ENCODE measurements at regions of chr15 and their contacts with region 1.

Region 1: DNA sequence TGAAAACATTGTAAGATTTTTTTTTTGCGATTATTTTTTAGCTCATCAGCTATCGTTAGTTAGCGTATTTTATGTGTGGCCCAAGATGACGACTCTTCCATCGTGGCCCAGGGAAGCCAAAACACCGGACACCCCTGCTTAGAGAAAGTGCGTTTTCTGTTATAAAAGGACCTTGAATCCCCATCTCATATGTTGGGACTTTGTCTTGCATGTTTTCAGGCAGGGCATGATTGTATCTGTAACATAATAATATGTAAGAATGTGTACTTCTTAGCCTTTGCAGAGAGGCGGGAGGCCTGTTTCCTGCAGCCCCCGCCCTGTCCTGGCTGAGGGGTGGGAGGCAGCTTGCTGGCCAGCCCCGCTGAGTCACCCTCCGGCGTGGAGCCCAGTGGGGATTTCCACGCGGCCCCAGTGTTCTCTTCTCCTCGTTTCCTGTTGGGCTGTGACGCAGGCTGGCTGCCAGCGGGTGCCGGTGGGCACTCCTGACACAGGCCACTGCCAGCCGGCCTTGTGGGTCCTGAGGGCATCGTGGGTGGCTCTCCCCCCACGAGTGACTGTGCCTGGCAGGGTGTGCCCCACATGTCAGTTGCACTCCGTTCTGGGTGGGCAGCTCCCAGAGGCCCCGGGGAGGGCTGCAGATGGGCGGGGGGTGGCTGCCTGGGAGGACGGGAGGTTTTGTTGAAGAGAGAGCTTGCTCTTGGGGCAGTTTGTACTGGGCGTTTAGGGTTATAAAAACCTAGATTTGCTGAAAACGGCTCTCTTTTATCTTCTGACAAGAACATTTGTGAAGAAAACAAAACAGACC is 55.6 kb downstream of the SMAD3 start:
- DNase-seq: peak; percentile 96 to 99 (median 98)
- H3K4me3 ChIP-seq: no peak overlapping the region
- H3K4me3 Mint-ChIP-seq: peak overlapping the region; percentile 72 to 75
- H3K27ac ChIP-seq: peak overlapping the region; percentile 92 to 94
- H3K27ac Mint-ChIP-seq: peak overlapping the region; percentile 97 to 99 (median 98)
- H3K4me1 ChIP-seq: peaks cover 70 to 76% of the 10 kb centered on the region in 2 donors
- H3K4me1 Mint-ChIP-seq: peaks cover 87% of the 10 kb centered on the region
- H3K27me3 ChIP-seq: no peaks in the 10 kb centered on the region
- H3K27me3 Mint-ChIP-seq: peaks cover 0 to 3% (median 0%) of the 10 kb centered on the region in 3 donors
- CTCF ChIP-seq: no peak

Region 2: GRCh38 chr15:67080900-67081431 is 40.1 kb before region 1 on chr15:
- intact Hi-C with region 1: loop called in 1 of 2 experiments (anchors 5 kb)
- DNase-seq: peak; percentile 95 to 97 (median 96)
- H3K4me3 ChIP-seq: peak overlapping the region in 1 of 3 experiments; percentile 45
- H3K4me3 Mint-ChIP-seq: peak overlapping the region; percentile 56 to 58
- H3K27ac ChIP-seq: peak overlapping the region; percentile 75 to 83
- H3K27ac Mint-ChIP-seq: peak overlapping the region; percentile 88 to 96 (median 95)
- H3K4me1 ChIP-seq: peaks cover 91 to 98% of the 10 kb centered on the region in 2 donors
- H3K4me1 Mint-ChIP-seq: peaks cover 97% of the 10 kb centered on the region
- H3K27me3 ChIP-seq: no peaks in the 10 kb centered on the region
- H3K27me3 Mint-ChIP-seq: peaks cover 0 to under 1% (median 0%) of the 10 kb centered on the region in 3 donors
- CTCF ChIP-seq: peak; percentile 45

Region 3: DNA sequence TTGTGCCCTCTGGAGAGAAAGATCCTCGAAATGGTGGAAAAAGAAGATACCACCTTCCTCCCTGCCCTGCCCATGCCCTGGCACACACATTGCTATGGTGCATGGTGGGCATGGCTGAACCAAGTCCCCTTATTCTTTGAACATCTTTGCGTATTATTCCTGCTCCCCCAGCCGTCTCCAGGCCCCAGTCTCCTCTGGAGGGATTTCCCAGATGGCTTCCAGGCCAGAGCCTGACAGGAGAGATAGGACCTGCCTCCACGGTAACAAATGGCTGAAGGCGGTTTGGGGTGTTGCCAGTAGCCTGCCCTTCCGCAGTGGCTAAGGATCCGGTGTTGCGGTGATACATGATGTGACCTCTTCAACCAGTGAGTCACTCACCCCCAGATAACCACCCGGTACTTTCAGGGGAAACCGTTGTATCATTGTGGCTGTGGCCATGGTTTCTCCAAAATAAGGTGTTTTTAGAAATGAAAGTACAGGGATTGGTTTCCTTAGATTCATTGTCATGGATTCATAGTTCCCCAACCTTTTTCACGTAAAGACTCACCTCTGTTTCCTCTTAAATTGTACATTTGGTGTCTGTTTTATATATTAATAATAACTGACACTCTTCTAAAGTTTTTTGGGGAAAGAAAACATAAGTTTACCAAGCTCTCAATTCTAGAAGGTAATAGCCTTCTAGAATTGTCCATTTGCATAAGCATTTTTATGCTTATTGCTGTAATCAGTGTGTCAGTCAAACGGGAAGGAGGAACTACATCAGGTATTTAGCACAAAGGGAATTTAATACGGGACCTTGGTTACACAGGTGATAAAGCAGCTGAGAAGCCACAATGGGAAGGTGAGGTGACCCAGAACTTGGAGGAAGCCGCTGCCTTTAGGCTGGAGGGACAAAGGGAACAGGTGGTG is 29.7 kb before region 1 on chr15:
- intact Hi-C with region 1: loop called in 1 of 2 experiments (anchors 2 kb)
- DNase-seq: peak; percentile 96 to 98 (median 98)
- H3K4me3 ChIP-seq: peak overlapping the region in 1 of 3 experiments; percentile 46
- H3K4me3 Mint-ChIP-seq: peak overlapping the region; percentile 64 to 65
- H3K27ac ChIP-seq: peak overlapping the region; percentile 73 to 98
- H3K27ac Mint-ChIP-seq: peak overlapping the region; percentile 95 to 99 (median 98)
- H3K4me1 ChIP-seq: peaks cover 76 to 89% of the 10 kb centered on the region in 2 donors
- H3K4me1 Mint-ChIP-seq: peaks cover 97% of the 10 kb centered on the region
- H3K27me3 ChIP-seq: no peaks in the 10 kb centered on the region
- H3K27me3 Mint-ChIP-seq: peaks cover 0 to 4% (median 2%) of the 10 kb centered on the region in 3 donors
- CTCF ChIP-seq: no peak

Region 4: DNA sequence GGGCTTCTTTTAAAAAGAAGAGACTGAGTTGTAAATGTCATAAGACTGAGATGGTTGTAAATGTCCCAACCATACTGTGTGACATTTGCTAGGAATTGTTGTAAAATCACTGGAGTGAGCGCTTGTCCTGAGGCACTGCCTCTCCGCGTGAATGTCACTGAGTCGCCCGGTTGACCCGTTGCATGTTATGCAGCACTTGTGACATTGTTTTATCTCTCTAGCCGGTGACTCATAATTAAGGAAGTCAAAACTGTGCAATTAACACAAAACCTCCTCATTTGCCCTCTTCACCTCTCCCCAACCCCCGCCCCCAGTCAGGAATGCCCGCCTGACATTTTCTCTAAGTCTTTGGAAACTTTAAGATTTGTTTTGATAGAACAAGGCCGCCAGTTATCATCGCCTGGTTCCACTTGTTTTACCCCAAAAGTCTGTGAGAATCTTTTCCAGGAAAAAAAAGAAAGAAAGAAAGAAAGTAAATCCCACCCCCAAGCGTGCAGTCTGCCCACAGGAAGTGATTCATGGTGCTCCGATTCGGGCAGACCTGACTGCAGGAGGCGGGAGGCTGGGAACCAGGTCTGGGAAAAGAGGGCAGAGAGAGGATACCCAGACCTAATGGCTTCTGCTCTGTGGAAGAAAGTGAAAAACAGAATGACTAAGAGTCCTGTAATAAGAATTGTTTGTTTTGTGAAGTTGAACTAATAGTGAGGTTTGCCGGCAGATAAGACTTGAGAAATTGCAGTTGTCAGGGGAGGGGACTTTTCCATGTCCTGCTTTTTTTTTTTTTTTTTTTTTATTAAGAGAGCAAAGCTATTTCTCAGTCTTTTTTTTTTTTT is 29.2 kb after region 1 on chr15:
- intact Hi-C with region 1: no loop called
- DNase-seq: peak; percentile 90 to 96 (median 94)
- H3K4me3 ChIP-seq: peak overlapping the region in 2 of 3 experiments; percentile 2 to 31
- H3K4me3 Mint-ChIP-seq: peak overlapping the region; percentile 69 to 82
- H3K27ac ChIP-seq: peak overlapping the region; percentile 67 to 93
- H3K27ac Mint-ChIP-seq: peak overlapping the region; percentile 94 to 99 (median 98)
- H3K4me1 ChIP-seq: peaks cover 57 to 58% of the 10 kb centered on the region in 2 donors
- H3K4me1 Mint-ChIP-seq: peaks cover 67% of the 10 kb centered on the region
- H3K27me3 ChIP-seq: no peaks in the 10 kb centered on the region
- H3K27me3 Mint-ChIP-seq: peaks cover 0 to 2% (median 0%) of the 10 kb centered on the region in 3 donors
- CTCF ChIP-seq: no peak

Region 5: GRCh38 chr15:67178569-67179210 is 57.6 kb after region 1 on chr15:
- intact Hi-C with region 1: no loop called
- DNase-seq: no peak
- H3K4me3 ChIP-seq: no peak overlapping the region
- H3K4me3 Mint-ChIP-seq: no peak overlapping the region
- H3K27ac ChIP-seq: peak overlapping the region in 1 of 2 donors; percentile 16
- H3K27ac Mint-ChIP-seq: peak overlapping the region in 1 of 7 donors; percentile 3
- H3K4me1 ChIP-seq: peaks cover 42 to 44% of the 10 kb centered on the region in 2 donors
- H3K4me1 Mint-ChIP-seq: peaks cover 44% of the 10 kb centered on the region
- H3K27me3 ChIP-seq: no peaks in the 10 kb centered on the region
- H3K27me3 Mint-ChIP-seq: peaks cover 0 to 5% (median 2%) of the 10 kb centered on the region in 3 donors
- CTCF ChIP-seq: no peak